ENCODE measurements at regions of chr6 and their contacts with region 1.

Region 1: DNA sequence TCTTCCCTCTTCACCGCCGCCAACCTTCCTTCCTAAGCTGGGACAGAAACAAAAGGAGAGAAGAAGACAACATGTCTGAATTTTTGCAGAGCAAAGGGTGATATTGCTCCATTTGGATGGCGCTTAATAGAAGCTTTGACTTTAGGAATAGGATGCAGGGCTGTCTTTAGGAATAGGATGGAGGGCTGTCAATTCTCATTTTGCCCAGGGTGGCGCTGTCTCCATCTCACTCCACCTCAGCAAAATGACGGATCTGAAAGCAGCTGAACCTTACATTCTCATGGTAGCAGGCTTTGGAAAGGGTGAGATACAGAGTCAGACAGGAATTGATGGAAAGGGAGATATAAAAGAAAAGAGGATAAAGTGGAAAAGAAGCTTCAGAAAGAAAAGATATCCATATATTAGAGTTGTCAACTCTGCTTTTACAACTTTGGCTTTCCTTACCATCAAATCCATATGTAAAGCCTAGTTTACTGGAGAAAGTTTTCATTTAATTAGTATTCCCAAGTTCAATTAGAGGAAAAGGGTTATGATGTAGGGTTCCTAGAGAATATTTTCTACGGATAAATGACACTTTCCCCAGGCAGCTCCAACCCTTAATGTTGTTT is 2.4 kb downstream of the MTCL3 start:
- DNase-seq: peak in 3 of 5 donors; percentile 11 to 61 (median 18)
- H3K4me3 ChIP-seq: peak overlapping the region; percentile 83
- H3K4me3 Mint-ChIP-seq: peak overlapping the region; percentile 85 to 96 (median 89)
- H3K27ac ChIP-seq: no peak overlapping the region
- H3K27ac Mint-ChIP-seq: peak overlapping the region; percentile 4 to 98 (median 56)
- H3K4me1 ChIP-seq: peaks cover 29% of the 10 kb centered on the region
- H3K4me1 Mint-ChIP-seq: peaks cover 27 to 43% (median 33%) of the 10 kb centered on the region in 3 donors
- H3K27me3 ChIP-seq: peaks cover 20% of the 10 kb centered on the region
- H3K27me3 Mint-ChIP-seq: peaks cover 31 to 36% of the 10 kb centered on the region in 2 donors

Region 2: DNA sequence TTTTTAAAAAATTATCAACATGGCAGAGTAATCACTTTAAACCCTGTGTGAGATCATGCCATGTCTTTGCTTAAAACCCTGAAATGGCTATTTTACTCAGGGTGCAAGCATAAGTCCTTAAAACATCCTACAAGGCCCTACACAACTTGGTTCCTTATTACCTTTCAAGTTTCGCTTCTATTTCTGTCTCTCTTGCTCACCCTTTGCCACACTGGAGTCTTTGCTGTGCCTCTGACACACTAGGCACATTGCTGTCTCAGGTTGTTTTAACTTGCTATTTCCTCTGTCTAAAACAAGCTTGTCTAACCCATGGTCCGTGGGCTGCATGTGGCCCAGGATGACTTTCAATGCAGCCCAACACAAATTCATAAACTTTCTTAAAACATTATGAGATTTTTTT is 113.1 kb before region 1 on chr6:
- CTCF ChIA-PET with region 1: no interaction called
- POLR2A ChIA-PET with region 1: no interaction called
- DNase-seq: no peak
- H3K4me3 ChIP-seq: no peak overlapping the region
- H3K4me3 Mint-ChIP-seq: no peak overlapping the region
- H3K27ac ChIP-seq: no peak overlapping the region
- H3K27ac Mint-ChIP-seq: peak overlapping the region in 1 of 8 donors; percentile 26
- H3K4me1 ChIP-seq: no peaks in the 10 kb centered on the region
- H3K4me1 Mint-ChIP-seq: peaks cover 0 to 4% (median 0%) of the 10 kb centered on the region in 3 donors
- H3K27me3 ChIP-seq: no peaks in the 10 kb centered on the region
- H3K27me3 Mint-ChIP-seq: peaks cover 0 to 4% of the 10 kb centered on the region in 2 donors

Region 3: GRCh38 chr6:127484212-127484858 is 32.4 kb before region 1 on chr6:
- CTCF ChIA-PET with region 1: interaction called, 28 read pairs
- POLR2A ChIA-PET with region 1: no interaction called
- DNase-seq: peak in 2 of 5 donors; percentile 8 to 18
- H3K4me3 ChIP-seq: peak overlapping the region; percentile 45
- H3K4me3 Mint-ChIP-seq: peak overlapping the region; percentile 73 to 89 (median 77)
- H3K27ac ChIP-seq: no peak overlapping the region
- H3K27ac Mint-ChIP-seq: peak overlapping the region; percentile 41 to 88 (median 62)
- H3K4me1 ChIP-seq: peaks cover 14% of the 10 kb centered on the region
- H3K4me1 Mint-ChIP-seq: peaks cover 15 to 26% (median 19%) of the 10 kb centered on the region in 3 donors
- H3K27me3 ChIP-seq: no peaks in the 10 kb centered on the region
- H3K27me3 Mint-ChIP-seq: no peaks in the 10 kb centered on the region

Region 4: DNA sequence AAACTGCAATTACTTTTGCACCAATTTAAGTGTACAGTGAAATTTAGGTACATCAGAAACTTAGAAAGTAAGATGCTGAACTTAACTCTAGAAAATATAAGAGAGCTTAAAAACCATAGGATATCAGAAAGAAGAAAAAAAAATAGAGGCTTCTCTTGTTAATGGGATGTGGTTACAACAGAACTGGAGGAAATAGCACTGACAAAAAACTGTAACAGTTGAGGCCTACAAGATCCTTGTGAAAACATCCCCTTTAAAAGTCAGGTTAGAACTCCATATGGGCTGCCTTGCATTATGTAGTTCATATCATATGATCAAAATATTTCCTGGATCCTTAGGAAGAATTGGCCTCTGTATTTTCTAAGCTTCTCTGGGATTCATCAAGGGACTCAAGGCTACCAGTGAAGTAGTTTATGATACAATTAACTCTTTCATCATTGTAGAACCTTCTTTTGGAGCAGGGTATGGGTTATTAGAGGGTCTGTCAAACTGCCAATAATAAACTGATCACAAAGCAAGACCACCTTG is 22.5 kb before region 1 on chr6:
- CTCF ChIA-PET with region 1: interaction called, 15 read pairs
- POLR2A ChIA-PET with region 1: no interaction called
- DNase-seq: no peak
- H3K4me3 ChIP-seq: no peak overlapping the region
- H3K4me3 Mint-ChIP-seq: no peak overlapping the region
- H3K27ac ChIP-seq: no peak overlapping the region
- H3K27ac Mint-ChIP-seq: no peak overlapping the region
- H3K4me1 ChIP-seq: no peaks in the 10 kb centered on the region
- H3K4me1 Mint-ChIP-seq: peaks cover 0 to 5% (median 0%) of the 10 kb centered on the region in 3 donors
- H3K27me3 ChIP-seq: no peaks in the 10 kb centered on the region
- H3K27me3 Mint-ChIP-seq: no peaks in the 10 kb centered on the region

Region 5: GRCh38 chr6:127533011-127533410 is 16.2 kb after region 1 on chr6:
- CTCF ChIA-PET with region 1: interaction called, 10 read pairs
- POLR2A ChIA-PET with region 1: no interaction called
- DNase-seq: no peak
- H3K4me3 ChIP-seq: no peak overlapping the region
- H3K4me3 Mint-ChIP-seq: no peak overlapping the region
- H3K27ac ChIP-seq: no peak overlapping the region
- H3K27ac Mint-ChIP-seq: no peak overlapping the region
- H3K4me1 ChIP-seq: no peaks in the 10 kb centered on the region
- H3K4me1 Mint-ChIP-seq: no peaks in the 10 kb centered on the region
- H3K27me3 ChIP-seq: no peaks in the 10 kb centered on the region
- H3K27me3 Mint-ChIP-seq: peaks cover 18 to 44% of the 10 kb centered on the region in 2 donors

Region 6: DNA sequence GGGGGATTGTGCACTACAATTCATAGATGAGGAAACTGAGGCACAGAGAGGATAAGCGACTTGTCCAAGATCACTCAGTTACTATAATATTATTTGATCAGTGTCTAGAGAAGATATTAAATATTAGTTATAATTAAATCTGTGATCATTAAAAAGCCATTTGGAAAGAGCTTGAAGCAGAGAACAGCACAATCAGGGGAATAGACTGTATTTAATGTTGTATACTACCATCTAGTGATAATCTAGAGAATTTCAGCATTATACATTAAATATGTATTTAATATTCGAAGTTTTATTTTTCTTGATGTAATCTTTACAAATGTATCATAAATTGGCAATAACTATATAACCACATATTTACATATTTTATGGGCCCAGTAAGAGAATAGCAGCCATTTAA is 22.5 kb after region 1 on chr6:
- CTCF ChIA-PET with region 1: interaction called, 16 read pairs
- POLR2A ChIA-PET with region 1: no interaction called
- DNase-seq: peak in 1 of 5 donors; percentile 3
- H3K4me3 ChIP-seq: no peak overlapping the region
- H3K4me3 Mint-ChIP-seq: no peak overlapping the region
- H3K27ac ChIP-seq: no peak overlapping the region
- H3K27ac Mint-ChIP-seq: no peak overlapping the region
- H3K4me1 ChIP-seq: no peaks in the 10 kb centered on the region
- H3K4me1 Mint-ChIP-seq: no peaks in the 10 kb centered on the region
- H3K27me3 ChIP-seq: no peaks in the 10 kb centered on the region
- H3K27me3 Mint-ChIP-seq: peaks cover 10 to 17% of the 10 kb centered on the region in 2 donors

Measured in CD8-positive, alpha-beta memory T cell (primary cell).